Activated CD4-positive, alpha-beta memory T cell treated with anti-CD3 and anti-CD28 coated beads, Interleukin-2, amount 10 ng/mL, durations not matched to agents 7 days and 5 days (primary cell): ENCODE measurements at regions of chr19 and their contacts with region 1.

Region 1: DNA sequence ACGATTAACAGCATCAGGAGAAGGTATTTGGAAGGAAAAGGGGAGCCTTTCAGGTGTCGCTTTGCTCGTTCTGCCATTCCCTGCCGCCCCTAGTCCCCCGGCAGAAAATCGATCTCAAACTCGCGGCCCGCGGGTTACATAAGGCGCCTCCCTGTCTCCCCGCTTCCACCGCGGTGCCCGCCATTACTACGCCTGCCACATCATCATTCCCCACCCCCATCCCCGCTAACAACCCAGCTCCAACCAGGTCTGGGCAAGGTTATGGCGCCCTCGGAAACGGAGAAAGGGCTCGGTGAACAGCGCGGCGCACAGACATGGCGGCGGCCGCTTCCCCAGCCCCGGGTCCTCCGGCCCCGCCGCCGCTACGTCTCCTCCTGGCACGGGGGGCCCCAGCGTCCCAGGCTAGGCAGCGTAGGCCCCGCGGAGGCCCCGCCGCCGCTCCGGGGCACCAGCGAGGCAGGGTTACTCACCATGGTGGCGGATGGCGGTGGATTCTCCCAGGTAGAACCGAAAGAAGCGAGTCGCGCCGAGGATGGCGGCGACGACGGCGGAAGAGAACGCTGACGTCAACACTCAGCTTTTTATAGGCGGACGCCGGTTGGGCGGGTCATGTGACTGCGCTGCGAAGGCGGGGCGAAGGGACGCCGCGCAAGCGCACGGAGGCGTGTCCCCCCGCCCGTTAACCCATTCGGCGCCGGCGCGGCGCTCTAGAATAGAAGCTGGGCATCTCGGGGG is at the start of gene EEF2:
- DNase-seq: peak; percentile 90
- H3K4me3 Mint-ChIP-seq: peak within 1 kb of the TSS; percentile 93
- H3K27ac Mint-ChIP-seq: peak within 1 kb of the TSS; percentile 95
- H3K4me1 Mint-ChIP-seq: peaks cover 57% of the 10 kb centered on the region
- H3K27me3 Mint-ChIP-seq: no peaks in the 10 kb centered on the region
- total RNA-seq, gene EEF2: 1,543 to 1,592 TPM

Region 2: GRCh38 chr19:3434712-3435553 is 550.1 kb before region 1 on chr19:
- CTCF ChIA-PET with region 1: interaction called, 10 read pairs
- POLR2A ChIA-PET with region 1: no interaction called
- DNase-seq: peak; percentile 96
- H3K4me3 Mint-ChIP-seq: peak overlapping the region; percentile 97
- H3K27ac Mint-ChIP-seq: peak overlapping the region; percentile 95
- H3K4me1 Mint-ChIP-seq: peaks cover 18% of the 10 kb centered on the region
- H3K27me3 Mint-ChIP-seq: no peaks in the 10 kb centered on the region

Region 3: GRCh38 chr19:3950871-3951861 is 33.9 kb before region 1 on chr19:
- CTCF ChIA-PET with region 1: no interaction called
- POLR2A ChIA-PET with region 1: no interaction called
- DNase-seq: no peak
- H3K4me3 Mint-ChIP-seq: no peak overlapping the region
- H3K27ac Mint-ChIP-seq: no peak overlapping the region
- H3K4me1 Mint-ChIP-seq: no peaks in the 10 kb centered on the region
- H3K27me3 Mint-ChIP-seq: peaks cover 6% of the 10 kb centered on the region

Region 4: DNA sequence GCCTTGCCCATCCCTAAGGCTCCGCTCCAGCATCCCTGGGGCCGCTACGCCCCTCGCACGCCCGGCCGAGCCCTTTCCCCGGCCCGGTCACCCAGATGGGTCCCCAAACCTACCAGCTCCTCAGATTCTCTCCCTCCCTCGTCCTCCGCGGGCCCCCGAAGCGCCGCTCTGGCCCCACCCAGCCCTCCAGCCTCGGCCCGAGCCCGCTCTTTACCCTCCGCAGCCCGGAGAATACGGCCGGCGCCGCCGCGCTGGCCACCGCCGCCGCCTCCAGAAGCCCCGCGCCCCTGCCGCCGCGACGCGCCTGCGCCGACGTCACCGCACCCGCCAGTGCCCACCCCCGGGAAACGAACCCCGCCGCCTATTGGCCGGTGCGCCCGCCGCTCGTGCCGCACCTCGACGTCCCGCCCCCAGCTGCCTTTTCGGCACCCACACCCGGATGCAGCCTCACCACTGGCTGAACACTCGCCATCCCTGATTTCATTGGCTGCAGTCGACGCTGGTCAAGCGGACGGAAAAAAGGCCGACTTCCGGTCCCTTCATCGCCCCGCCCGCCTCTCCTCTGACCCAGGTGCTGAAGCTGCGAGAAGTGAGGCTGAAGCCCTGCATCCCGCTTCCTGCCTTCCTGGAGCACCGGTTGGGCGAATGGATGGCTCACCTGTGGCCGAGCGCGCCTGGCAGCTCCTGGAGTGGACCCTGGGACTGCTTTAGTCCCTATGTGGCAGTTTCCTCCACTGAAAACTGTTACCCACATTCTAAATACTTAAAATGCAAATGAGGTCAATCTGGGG is 14.1 kb before region 1 on chr19 and contains the start of gene DAPK3:
- CTCF ChIA-PET with region 1: interaction called, 11 read pairs
- POLR2A ChIA-PET with region 1: interaction called, 122 read pairs
- DNase-seq: peak; percentile 94
- H3K4me3 Mint-ChIP-seq: peak within 1 kb of the TSS; percentile 90
- H3K27ac Mint-ChIP-seq: peak within 1 kb of the TSS; percentile 77
- H3K4me1 Mint-ChIP-seq: peaks cover 30% of the 10 kb centered on the region
- H3K27me3 Mint-ChIP-seq: no peaks in the 10 kb centered on the region
- total RNA-seq, gene DAPK3: 41.3 to 42.7 TPM

Region 5: GRCh38 chr19:4065430-4066175 is 80.5 kb after region 1 on chr19:
- CTCF ChIA-PET with region 1: interaction called, 3 read pairs
- POLR2A ChIA-PET with region 1: interaction called, 10 read pairs
- DNase-seq: peak; percentile 97
- H3K4me3 Mint-ChIP-seq: peak overlapping the region; percentile 65
- H3K27ac Mint-ChIP-seq: peak overlapping the region; percentile 63
- H3K4me1 Mint-ChIP-seq: peaks cover 46% of the 10 kb centered on the region
- H3K27me3 Mint-ChIP-seq: no peaks in the 10 kb centered on the region

Region 6: GRCh38 chr19:4139614-4140236 is 154.7 kb after region 1 on chr19:
- CTCF ChIA-PET with region 1: interaction called, 29 read pairs
- POLR2A ChIA-PET with region 1: interaction called, 10 read pairs
- DNase-seq: peak; percentile 89
- H3K4me3 Mint-ChIP-seq: peak overlapping the region; percentile 48
- H3K27ac Mint-ChIP-seq: peak overlapping the region; percentile 17
- H3K4me1 Mint-ChIP-seq: peaks cover 13% of the 10 kb centered on the region
- H3K27me3 Mint-ChIP-seq: peaks cover 2% of the 10 kb centered on the region